ENCODE measurements at regions of chr9 and their contacts with region 1.

Region 1: GRCh38 chr9:34252670-34253459 is 74.0 kb downstream of the UBAP1 start:
- DNase-seq: peak; percentile 61
- H3K4me3 ChIP-seq: peak overlapping the region; percentile 10
- H3K27ac ChIP-seq: peak overlapping the region; percentile 87
- H3K4me1 ChIP-seq: peaks cover 84% of the 10 kb centered on the region
- H3K27me3 ChIP-seq: no peaks in the 10 kb centered on the region
- CTCF ChIP-seq: peak; percentile 88

Region 2: GRCh38 chr9:33366979-33367480 is 885.8 kb before region 1 on chr9:
- intact Hi-C with region 1: no loop called
- DNase-seq: no peak
- H3K4me3 ChIP-seq: no peak overlapping the region
- H3K27ac ChIP-seq: no peak overlapping the region
- H3K4me1 ChIP-seq: no peaks in the 10 kb centered on the region
- H3K27me3 ChIP-seq: no peaks in the 10 kb centered on the region
- CTCF ChIP-seq: no peak

Region 3: GRCh38 chr9:34126207-34127034 is 126.4 kb before region 1 on chr9 and contains the start of gene DCAF12:
- intact Hi-C with region 1: loop called (anchors 10 kb)
- DNase-seq: peak; percentile 91
- H3K4me3 ChIP-seq: peak within 1 kb of the TSS; percentile 86
- H3K27ac ChIP-seq: peak within 1 kb of the TSS; percentile 92
- H3K4me1 ChIP-seq: peaks cover 58% of the 10 kb centered on the region
- H3K27me3 ChIP-seq: no peaks in the 10 kb centered on the region
- CTCF ChIP-seq: no peak
- total RNA-seq, gene DCAF12: 16.4 TPM

Region 4: GRCh38 chr9:34158362-34158869 is 94.4 kb before region 1 on chr9:
- intact Hi-C with region 1: no loop called
- DNase-seq: no peak
- H3K4me3 ChIP-seq: no peak overlapping the region
- H3K27ac ChIP-seq: no peak overlapping the region
- H3K4me1 ChIP-seq: no peaks in the 10 kb centered on the region
- H3K27me3 ChIP-seq: no peaks in the 10 kb centered on the region
- CTCF ChIP-seq: no peak

Measured in left ventricle myocardium inferior (tissue), 1 donor.